Activated CD8-positive, alpha-beta T cell treated with anti-CD3 and anti-CD28 coated beads, Interleukin-2, amount 10 ng/mL, durations not matched to agents 7 days and 5 days (primary cell): ENCODE measurements at regions of chr9 and their contacts with region 1.

Region 1: GRCh38 chr9:120950421-120951388 is 24.1 kb upstream of the TRAF1 start:
- DNase-seq: no peak
- ATAC-seq: no peak
- H3K4me3 Mint-ChIP-seq: no peak overlapping the region
- H3K27ac Mint-ChIP-seq: no peak overlapping the region
- H3K4me1 Mint-ChIP-seq: no peaks in the 10 kb centered on the region
- H3K27me3 Mint-ChIP-seq: no peaks in the 10 kb centered on the region

Region 2: GRCh38 chr9:120783602-120784047 is 167.1 kb before region 1 on chr9:
- CTCF ChIA-PET with region 1: no interaction called
- POLR2A ChIA-PET with region 1: no interaction called
- DNase-seq: no peak
- ATAC-seq: no peak
- H3K4me3 Mint-ChIP-seq: no peak overlapping the region
- H3K27ac Mint-ChIP-seq: no peak overlapping the region
- H3K4me1 Mint-ChIP-seq: peaks cover 43% of the 10 kb centered on the region
- H3K27me3 Mint-ChIP-seq: no peaks in the 10 kb centered on the region

Region 3: DNA sequence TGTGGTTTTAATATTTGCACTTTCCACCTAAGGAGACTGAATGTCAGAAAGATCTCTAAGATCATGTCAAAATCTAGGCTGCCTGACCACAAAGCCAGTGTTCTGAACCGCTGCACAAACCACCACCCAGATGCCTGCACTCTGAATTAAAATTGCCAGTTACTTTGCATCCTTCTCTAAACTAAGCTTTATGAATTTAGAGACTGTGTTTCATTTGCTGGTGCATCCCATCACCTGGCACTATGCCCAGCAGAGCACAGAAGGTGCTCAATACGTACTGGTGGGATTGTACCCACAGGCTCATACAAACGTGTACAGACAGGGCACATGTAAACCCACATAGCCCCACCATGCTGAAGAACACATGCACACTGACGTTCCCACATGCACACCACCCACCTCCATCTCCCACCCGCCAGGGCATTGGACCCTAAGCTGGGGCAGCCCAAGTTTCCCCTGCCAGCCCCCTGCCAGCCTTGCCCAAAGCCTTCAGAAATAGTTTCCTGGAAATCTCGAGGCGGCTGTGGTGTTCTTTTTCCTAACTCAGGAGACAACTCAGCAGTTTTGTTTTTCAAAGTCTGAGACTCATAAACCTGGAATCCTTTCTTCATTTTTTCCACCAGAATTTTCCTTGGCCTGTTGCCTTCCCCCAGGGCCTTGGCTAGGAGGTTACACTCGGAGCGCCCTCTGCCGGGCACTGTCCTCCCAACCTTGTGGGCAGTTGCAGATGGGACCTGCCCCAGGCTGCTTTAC is 14.5 kb before region 1 on chr9:
- CTCF ChIA-PET with region 1: interaction called, 14 read pairs
- POLR2A ChIA-PET with region 1: interaction called, 3 read pairs
- DNase-seq: peak; percentile 91
- ATAC-seq: peak; percentile 72
- H3K4me3 Mint-ChIP-seq: peak overlapping the region; percentile 15
- H3K27ac Mint-ChIP-seq: peak overlapping the region; percentile 77
- H3K4me1 Mint-ChIP-seq: peaks cover 62% of the 10 kb centered on the region
- H3K27me3 Mint-ChIP-seq: peaks cover 5% of the 10 kb centered on the region

Region 4: DNA sequence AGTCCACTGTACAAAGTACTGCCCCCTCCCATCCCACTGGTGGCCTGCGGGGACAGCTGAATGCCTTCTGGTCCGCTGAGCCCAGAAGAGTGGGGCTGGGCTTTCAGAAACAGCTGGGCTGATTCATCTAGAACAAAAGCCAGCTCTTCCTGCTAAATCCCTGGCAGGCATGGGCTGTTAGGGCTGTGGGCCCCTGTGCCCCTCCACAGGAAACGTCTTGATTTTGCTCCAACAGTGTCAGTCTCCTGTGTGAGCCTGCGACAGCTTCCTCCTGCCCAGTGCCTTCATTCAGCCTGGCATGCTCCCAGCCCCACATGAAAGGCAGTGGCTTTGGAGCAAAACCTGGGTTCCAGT is 310.4 kb after region 1 on chr9:
- CTCF ChIA-PET with region 1: no interaction called
- POLR2A ChIA-PET with region 1: no interaction called
- DNase-seq: no peak
- ATAC-seq: no peak
- H3K4me3 Mint-ChIP-seq: no peak overlapping the region
- H3K27ac Mint-ChIP-seq: no peak overlapping the region
- H3K4me1 Mint-ChIP-seq: no peaks in the 10 kb centered on the region
- H3K27me3 Mint-ChIP-seq: peaks cover 2% of the 10 kb centered on the region